Mammary epithelial cell (primary cell): ENCODE measurements at regions of chr2 and their contacts with region 1.

Region 1: DNA sequence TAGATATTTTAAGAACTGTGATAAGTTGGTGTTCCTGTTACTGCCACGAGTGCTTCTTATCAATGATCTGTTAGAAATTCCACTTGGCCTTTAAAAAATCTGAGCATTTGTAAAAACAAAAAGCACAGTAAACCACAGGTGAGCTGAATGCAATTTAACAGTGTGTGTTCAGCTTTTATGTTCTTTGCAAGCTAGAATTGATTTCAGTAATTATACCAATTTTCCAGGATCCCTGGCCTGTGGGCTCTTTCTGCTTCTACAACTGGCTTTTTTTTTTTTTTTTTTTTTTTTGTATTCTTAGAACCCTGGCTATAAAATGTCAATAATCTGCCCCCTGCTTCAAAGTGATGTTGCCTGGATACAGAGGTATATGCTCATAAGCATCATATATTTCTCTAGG is 548.5 kb upstream of the SLC8A1 start:
- DNase-seq: no peak
- H3K4me3 ChIP-seq: no peak overlapping the region
- H3K27ac ChIP-seq: no peak overlapping the region
- H3K4me1 ChIP-seq: no peaks in the 10 kb centered on the region
- H3K27me3 ChIP-seq: no peaks in the 10 kb centered on the region
- CTCF ChIP-seq: no peak

Region 2: DNA sequence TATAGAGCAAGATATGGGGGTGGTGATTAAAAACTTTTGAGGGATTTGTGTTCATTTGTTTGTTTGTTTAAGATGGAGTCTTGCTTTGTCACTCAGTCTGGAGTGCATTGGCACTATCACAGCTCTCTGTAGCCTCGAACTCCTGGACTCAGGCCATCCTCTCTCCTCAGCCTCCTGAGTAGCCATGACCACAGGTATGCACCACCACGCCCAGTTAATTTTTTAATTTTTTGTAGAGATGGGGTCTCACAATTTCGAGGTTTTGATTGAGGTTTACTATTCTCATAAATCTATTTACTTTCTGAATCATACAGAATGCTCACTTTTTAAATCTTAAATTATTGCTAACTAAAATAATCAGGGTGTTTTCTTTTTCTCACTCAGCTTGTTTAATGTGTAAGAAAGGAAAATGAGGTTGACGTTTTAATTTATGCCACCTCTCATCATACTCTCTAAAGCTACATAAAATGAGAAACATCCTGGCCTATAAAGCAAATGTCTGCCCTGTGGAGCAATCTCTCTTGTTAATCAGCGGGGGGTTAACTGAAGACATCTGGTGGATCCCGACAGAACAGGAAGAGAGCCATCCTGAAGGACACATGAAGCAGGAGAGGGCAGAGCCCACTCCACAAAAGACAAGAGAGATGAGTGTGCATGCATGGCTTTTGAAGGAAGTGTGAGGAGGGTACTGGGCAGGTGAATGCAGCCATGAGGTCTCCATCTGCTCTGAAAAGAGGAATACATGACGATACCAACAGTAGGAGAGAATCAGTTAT is 40.6 kb after region 1 on chr2:
- CTCF ChIA-PET with region 1: interaction called, 22 read pairs
- dilution Hi-C with region 1: no loop called
- in situ Hi-C with region 1: no loop called
- intact Hi-C with region 1: no loop called
- DNase-seq: no peak
- H3K4me3 ChIP-seq: no peak overlapping the region
- H3K27ac ChIP-seq: no peak overlapping the region
- H3K4me1 ChIP-seq: no peaks in the 10 kb centered on the region
- H3K27me3 ChIP-seq: no peaks in the 10 kb centered on the region
- CTCF ChIP-seq: no peak

Region 3: DNA sequence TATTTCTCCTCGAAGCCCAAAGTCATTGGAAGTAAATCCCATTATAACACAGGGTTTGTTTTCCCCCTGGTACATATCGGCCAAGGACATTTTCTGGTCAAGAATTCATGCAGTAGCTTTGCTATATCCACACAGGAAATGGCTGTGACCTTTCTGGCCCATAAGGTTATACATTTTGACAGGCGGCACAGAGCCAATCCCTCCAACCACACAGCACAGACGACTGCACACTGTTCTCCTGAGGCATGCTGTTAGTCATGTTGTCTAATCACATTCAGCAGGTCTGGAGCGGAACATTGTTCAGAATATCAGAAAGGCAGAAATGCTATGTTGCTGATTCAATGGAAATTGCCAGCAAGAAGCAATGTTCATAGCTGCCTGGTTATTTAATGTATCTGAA is 193.9 kb after region 1 on chr2:
- CTCF ChIA-PET with region 1: no interaction called
- dilution Hi-C with region 1: no loop called
- in situ Hi-C with region 1: no loop called
- intact Hi-C with region 1: no loop called
- DNase-seq: no peak
- H3K4me3 ChIP-seq: no peak overlapping the region
- H3K27ac ChIP-seq: no peak overlapping the region
- H3K4me1 ChIP-seq: no peaks in the 10 kb centered on the region
- H3K27me3 ChIP-seq: no peaks in the 10 kb centered on the region
- CTCF ChIP-seq: no peak